ENCODE measurements at regions of chr16 and their contacts with region 1.

Region 1: GRCh38 chr16:58000706-58001676 is at the start of gene USB1:
- DNase-seq: peak; percentile 89
- ATAC-seq: peak; percentile 77
- H3K4me3 Mint-ChIP-seq: peak within 1 kb of the TSS; percentile 92
- H3K27ac Mint-ChIP-seq: peak within 1 kb of the TSS; percentile 93
- H3K4me1 Mint-ChIP-seq: peaks cover 56% of the 10 kb centered on the region
- H3K27me3 Mint-ChIP-seq: no peaks in the 10 kb centered on the region
- total RNA-seq, gene USB1: 62.2 to 68.0 TPM

Region 2: GRCh38 chr16:57899771-57900661 is 101.0 kb before region 1 on chr16:
- CTCF ChIA-PET with region 1: interaction called, 64 read pairs
- DNase-seq: peak; percentile 81
- ATAC-seq: peak; percentile 82
- H3K4me3 Mint-ChIP-seq: no peak overlapping the region
- H3K27ac Mint-ChIP-seq: no peak overlapping the region
- H3K4me1 Mint-ChIP-seq: peaks cover 4% of the 10 kb centered on the region
- H3K27me3 Mint-ChIP-seq: peaks cover 19% of the 10 kb centered on the region

Region 3: DNA sequence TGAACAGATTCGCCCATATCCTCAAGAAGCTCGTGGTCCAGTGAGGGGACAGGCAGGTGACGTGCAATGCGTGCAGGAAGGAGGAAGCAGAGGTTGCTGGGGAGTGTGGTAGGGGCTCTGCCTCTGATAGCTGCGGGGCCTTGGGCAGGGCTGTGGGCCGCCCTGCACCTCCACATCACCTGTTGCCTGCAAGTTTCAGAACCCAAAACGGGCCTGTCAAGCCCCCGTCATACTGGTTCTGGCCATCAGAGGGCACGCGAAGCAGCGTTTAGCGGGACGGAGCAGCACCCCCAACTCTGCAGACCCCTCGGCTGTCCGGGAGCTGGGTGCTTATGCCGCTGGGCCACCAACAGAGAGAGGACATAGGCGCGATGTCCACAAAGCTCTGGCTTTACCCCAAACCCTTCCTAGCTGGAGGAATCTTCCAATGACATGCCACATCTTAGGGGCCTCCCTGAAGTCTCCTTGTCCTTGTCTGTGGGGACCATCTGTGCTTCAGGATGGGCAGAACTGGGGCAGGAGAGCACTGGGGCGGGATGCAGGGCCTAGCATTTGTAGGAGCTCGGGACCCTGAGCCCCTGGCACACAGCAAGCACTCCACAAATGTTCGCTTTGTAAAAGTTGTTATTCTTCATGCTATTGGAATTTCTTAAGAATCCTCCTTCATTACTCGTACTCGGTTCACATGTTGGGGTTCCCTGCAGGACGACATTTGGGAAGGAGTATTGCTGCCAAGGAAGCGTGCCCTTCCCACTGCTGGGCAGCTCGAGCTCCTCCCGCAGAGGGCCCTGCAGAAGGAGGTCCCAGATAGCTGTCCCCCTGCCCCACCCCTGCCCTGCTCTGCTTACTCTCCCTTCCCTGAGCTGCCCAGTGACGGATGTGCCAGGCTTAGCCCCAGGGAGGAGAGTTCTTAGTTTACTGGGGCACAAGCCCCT is 94.3 kb before region 1 on chr16:
- CTCF ChIA-PET with region 1: interaction called, 64 read pairs
- DNase-seq: peak; percentile 52
- ATAC-seq: peak; percentile 53
- H3K4me3 Mint-ChIP-seq: no peak overlapping the region
- H3K27ac Mint-ChIP-seq: no peak overlapping the region
- H3K4me1 Mint-ChIP-seq: peaks cover 3% of the 10 kb centered on the region
- H3K27me3 Mint-ChIP-seq: peaks cover 5% of the 10 kb centered on the region

Region 4: GRCh38 chr16:57984331-57985203 is 16.4 kb before region 1 on chr16:
- CTCF ChIA-PET with region 1: interaction called, 34 read pairs
- DNase-seq: peak; percentile 96
- ATAC-seq: peak; percentile 98
- H3K4me3 Mint-ChIP-seq: peak overlapping the region; percentile 81
- H3K27ac Mint-ChIP-seq: peak overlapping the region; percentile 73
- H3K4me1 Mint-ChIP-seq: peaks cover 12% of the 10 kb centered on the region
- H3K27me3 Mint-ChIP-seq: peaks cover 13% of the 10 kb centered on the region

Region 5: DNA sequence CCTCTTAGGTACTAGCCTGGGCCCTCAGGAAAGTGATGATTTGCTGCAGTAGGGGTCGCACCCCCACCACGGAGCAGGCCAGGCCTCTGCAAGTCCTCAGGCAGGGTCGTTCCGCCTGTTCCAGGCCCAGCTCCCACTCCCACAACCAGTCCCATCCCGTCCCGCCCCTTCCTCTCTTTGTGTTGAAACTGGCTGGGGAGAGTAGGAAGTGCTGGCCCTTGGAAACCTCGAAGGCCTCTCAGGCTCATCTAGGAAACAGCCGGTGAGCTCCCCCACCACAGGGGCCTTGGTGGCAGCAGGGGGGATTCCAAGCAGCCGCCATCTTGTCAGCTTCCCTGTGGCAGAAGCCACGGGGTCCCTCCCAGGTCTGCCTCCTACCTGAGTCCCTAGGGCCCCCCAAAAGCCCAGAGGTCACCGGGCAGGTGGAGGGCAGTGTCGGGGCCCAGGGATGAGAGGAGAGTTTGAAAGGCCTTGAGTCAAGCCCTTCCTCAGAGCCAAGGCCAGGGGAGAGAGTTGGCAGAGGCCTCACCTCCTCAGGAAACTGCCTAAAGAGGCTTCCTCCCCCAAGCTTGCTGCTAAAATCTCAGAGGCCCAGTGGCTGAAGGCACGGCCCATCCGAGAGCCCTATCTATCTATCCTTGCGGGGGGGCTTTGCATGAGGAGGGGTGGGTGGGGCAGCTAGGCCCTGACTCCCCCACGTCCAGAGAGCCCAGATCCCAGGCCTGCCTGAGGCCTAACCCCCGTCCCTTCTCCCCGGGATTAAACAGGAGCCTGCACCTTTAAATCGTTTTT is 46.8 kb after region 1 on chr16:
- CTCF ChIA-PET with region 1: no interaction called
- DNase-seq: no peak
- ATAC-seq: no peak
- H3K4me3 Mint-ChIP-seq: no peak overlapping the region
- H3K27ac Mint-ChIP-seq: no peak overlapping the region
- H3K4me1 Mint-ChIP-seq: no peaks in the 10 kb centered on the region
- H3K27me3 Mint-ChIP-seq: peaks cover 2% of the 10 kb centered on the region

Measured in activated CD8-positive, alpha-beta memory T cell treated with anti-CD3 and anti-CD28 coated beads, Interleukin-2, amount 10 ng/mL, durations not matched to agents 7 days and 5 days (primary cell).